GM12878 (cell line): ENCODE measurements at regions of chr7 and their contacts with region 1.

Region 1: DNA sequence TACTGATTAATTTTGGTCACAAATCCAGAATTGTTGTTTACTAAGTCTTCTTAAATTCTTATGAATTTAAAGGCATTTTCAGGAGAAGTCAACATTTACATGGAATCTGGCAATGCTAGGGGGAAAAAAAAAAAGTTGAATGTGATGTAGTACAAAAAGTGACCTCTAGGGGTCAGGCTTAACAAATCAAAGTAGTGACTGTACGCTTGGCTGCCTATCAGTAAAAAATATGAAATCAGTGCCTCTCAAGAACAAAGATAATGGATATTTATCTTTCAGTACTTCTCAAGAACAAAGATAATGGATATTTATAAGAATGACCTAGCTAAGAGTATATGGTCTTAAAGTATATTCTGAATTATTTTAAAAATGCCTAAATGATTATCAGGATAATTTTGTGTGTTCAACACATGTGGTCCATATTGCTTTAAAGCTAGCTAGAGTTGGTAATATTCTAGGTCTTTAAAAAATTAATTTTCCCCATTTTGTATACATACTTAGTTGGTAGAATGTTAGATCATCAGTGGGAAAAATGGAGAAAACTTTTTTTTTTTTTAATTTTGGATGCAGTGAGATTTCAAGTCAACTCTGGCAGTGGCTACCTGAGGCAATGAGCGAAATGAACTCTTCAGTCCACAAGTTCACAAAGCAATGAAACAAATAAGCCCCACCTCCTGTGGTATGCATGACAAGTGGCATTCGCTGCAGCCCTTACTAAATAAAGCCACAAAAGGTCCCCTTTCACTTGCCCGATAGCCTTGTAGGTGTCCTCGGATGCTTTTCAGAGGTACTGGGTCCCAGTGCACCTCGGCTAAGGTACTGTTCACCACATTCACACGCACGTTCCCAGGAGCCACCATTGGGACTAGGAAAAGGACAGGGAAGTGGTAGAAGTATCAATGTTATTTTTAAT is 51.2 kb upstream of the LAMB4 start:
- DNase-seq: peak; percentile 28
- ATAC-seq: peak; percentile 82
- H3K4me3 ChIP-seq: no peak overlapping the region
- H3K27ac ChIP-seq: no peak overlapping the region
- H3K4me1 ChIP-seq: no peaks in the 10 kb centered on the region
- H3K27me3 ChIP-seq: no peaks in the 10 kb centered on the region
- CTCF ChIP-seq: peak; percentile 48 to 74 (median 62); a peak in 5 of 6 replicates
- EP300 ChIP-seq: no peak
- POLR2A ChIP-seq: no peak
- RAD21 ChIP-seq: peak; percentile 85

Region 2: GRCh38 chr7:108124820-108125219 is 56.5 kb before region 1 on chr7:
- CTCF ChIA-PET with region 1: no interaction called
- POLR2A ChIA-PET with region 1: no interaction called
- RAD21 ChIA-PET with region 1: no interaction called
- SMC1A ChIA-PET with region 1: no interaction called
- in situ Hi-C with region 1: no loop called
- intact Hi-C with region 1: no loop called
- DNase-seq: no peak
- ATAC-seq: no peak
- H3K4me3 ChIP-seq: no peak overlapping the region
- H3K27ac ChIP-seq: no peak overlapping the region
- H3K4me1 ChIP-seq: no peaks in the 10 kb centered on the region
- H3K27me3 ChIP-seq: 0 out of 4 replicates have a peak, but pooled peaks cover 0 to 3% of the 10 kb centered on the region in 2 experiments
- CTCF ChIP-seq: no peak
- EP300 ChIP-seq: no peak
- POLR2A ChIP-seq: no peak
- RAD21 ChIP-seq: no peak

Region 3: GRCh38 chr7:108203537-108203936 is 22.2 kb after region 1 on chr7:
- CTCF ChIA-PET with region 1: interaction called, 8 read pairs
- POLR2A ChIA-PET with region 1: no interaction called
- RAD21 ChIA-PET with region 1: interaction called, 10 read pairs
- SMC1A ChIA-PET with region 1: interaction called, 6 read pairs
- in situ Hi-C with region 1: no loop called
- intact Hi-C with region 1: no loop called
- DNase-seq: no peak
- ATAC-seq: peak; percentile 69
- H3K4me3 ChIP-seq: no peak overlapping the region
- H3K27ac ChIP-seq: no peak overlapping the region
- H3K4me1 ChIP-seq: peaks cover 3% of the 10 kb centered on the region; the same call in 1 of the 2 replicates
- H3K27me3 ChIP-seq: no peaks in the 10 kb centered on the region
- CTCF ChIP-seq: no peak
- EP300 ChIP-seq: no peak
- POLR2A ChIP-seq: no peak
- RAD21 ChIP-seq: no peak

Region 4: GRCh38 chr7:108308903-108309302 is 127.6 kb after region 1 on chr7:
- CTCF ChIA-PET with region 1: no interaction called
- POLR2A ChIA-PET with region 1: no interaction called
- RAD21 ChIA-PET with region 1: no interaction called
- SMC1A ChIA-PET with region 1: interaction called, 6 read pairs
- in situ Hi-C with region 1: no loop called
- intact Hi-C with region 1: loop called (anchors 10 kb)
- DNase-seq: no peak
- ATAC-seq: peak; percentile 70
- H3K4me3 ChIP-seq: no peak overlapping the region
- H3K27ac ChIP-seq: no peak overlapping the region
- H3K4me1 ChIP-seq: peaks cover 9% of the 10 kb centered on the region
- H3K27me3 ChIP-seq: no peaks in the 10 kb centered on the region
- CTCF ChIP-seq: no peak
- EP300 ChIP-seq: peak in 1 of 2 experiments; percentile 29; a peak in 1 of 4 replicates
- POLR2A ChIP-seq: no peak
- RAD21 ChIP-seq: no peak

Region 5: GRCh38 chr7:108384721-108385481 is 203.6 kb after region 1 on chr7:
- CTCF ChIA-PET with region 1: interaction called, 4 read pairs
- POLR2A ChIA-PET with region 1: no interaction called
- RAD21 ChIA-PET with region 1: no interaction called
- SMC1A ChIA-PET with region 1: interaction called, 4 read pairs
- in situ Hi-C with region 1: no loop called
- intact Hi-C with region 1: loop called (anchors 2 kb)
- DNase-seq: no peak
- ATAC-seq: peak; percentile 96
- H3K4me3 ChIP-seq: no peak overlapping the region
- H3K27ac ChIP-seq: no peak overlapping the region
- H3K4me1 ChIP-seq: no peaks in the 10 kb centered on the region; the same call in 1 of the 2 replicates
- H3K27me3 ChIP-seq: no peaks in the 10 kb centered on the region
- CTCF ChIP-seq: peak; percentile 43 to 51 (median 45); a peak in 4 of 6 replicates
- EP300 ChIP-seq: no peak
- POLR2A ChIP-seq: no peak
- RAD21 ChIP-seq: peak; percentile 71

Region 6: GRCh38 chr7:108452722-108453121 is 271.4 kb after region 1 on chr7:
- CTCF ChIA-PET with region 1: interaction called, 16 read pairs
- POLR2A ChIA-PET with region 1: no interaction called
- RAD21 ChIA-PET with region 1: interaction called, 5 read pairs
- SMC1A ChIA-PET with region 1: interaction called, 4 read pairs
- in situ Hi-C with region 1: loop called (anchors 5 kb)
- intact Hi-C with region 1: loop called (anchors 1 kb)
- DNase-seq: no peak
- ATAC-seq: peak; percentile 65
- H3K4me3 ChIP-seq: no peak overlapping the region
- H3K27ac ChIP-seq: no peak overlapping the region
- H3K4me1 ChIP-seq: no peaks in the 10 kb centered on the region
- H3K27me3 ChIP-seq: peaks cover 13 to 14% of the 10 kb centered on the region in 2 experiments
- CTCF ChIP-seq: peak; percentile 47 to 61 (median 57); a peak in 5 of 6 replicates
- EP300 ChIP-seq: no peak
- POLR2A ChIP-seq: no peak
- RAD21 ChIP-seq: peak; percentile 56

Region 7: DNA sequence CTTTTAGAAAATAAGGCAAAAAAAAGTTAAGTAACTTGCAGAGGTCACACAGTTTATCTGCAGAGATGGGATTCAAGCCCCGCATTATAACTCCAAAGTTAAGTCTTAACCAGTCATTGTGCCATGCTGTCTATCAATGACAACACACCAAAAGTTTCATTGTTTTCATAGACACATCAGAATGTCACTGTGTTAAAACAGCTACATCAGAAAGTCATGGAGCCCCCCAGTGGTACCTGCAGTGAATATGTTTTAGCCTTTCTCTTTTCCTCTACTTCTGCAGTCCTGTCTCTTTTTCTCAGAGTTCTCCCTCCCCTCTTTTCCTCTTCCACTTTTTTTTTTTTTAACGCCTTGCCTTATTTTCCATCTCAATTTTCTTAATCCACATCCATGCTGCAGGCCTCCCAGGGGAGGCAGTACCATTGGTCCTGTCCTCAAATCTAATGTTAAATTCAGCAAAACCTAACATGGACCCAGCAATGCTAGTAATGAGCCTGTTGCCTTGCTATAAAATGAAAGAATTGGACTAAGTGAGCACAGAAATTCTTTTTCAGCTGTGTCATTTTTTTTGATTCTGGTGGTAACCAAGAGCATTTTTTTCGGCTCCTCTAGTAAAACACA is 278.7 kb after region 1 on chr7:
- CTCF ChIA-PET with region 1: interaction called, 19 read pairs
- POLR2A ChIA-PET with region 1: no interaction called
- RAD21 ChIA-PET with region 1: interaction called, 7 read pairs
- SMC1A ChIA-PET with region 1: interaction called, 14 read pairs
- in situ Hi-C with region 1: loop called (anchors 5 kb)
- intact Hi-C with region 1: loop called (anchors 1 kb)
- DNase-seq: no peak
- ATAC-seq: peak; percentile 77
- H3K4me3 ChIP-seq: no peak overlapping the region
- H3K27ac ChIP-seq: no peak overlapping the region
- H3K4me1 ChIP-seq: no peaks in the 10 kb centered on the region
- H3K27me3 ChIP-seq: peaks cover 11 to 16% of the 10 kb centered on the region in 2 experiments
- CTCF ChIP-seq: peak; percentile 50 to 73 (median 60); a peak in 5 of 6 replicates
- EP300 ChIP-seq: no peak
- POLR2A ChIP-seq: no peak
- RAD21 ChIP-seq: peak; percentile 82

Region 8: GRCh38 chr7:108503112-108504026 is 322.0 kb after region 1 on chr7:
- CTCF ChIA-PET with region 1: interaction called, 46 read pairs
- POLR2A ChIA-PET with region 1: no interaction called
- RAD21 ChIA-PET with region 1: interaction called, 7 read pairs
- SMC1A ChIA-PET with region 1: interaction called, 52 read pairs
- in situ Hi-C with region 1: loop called (anchors 5 kb)
- intact Hi-C with region 1: no loop called
- DNase-seq: peak; percentile 35
- ATAC-seq: peak; percentile 96
- H3K4me3 ChIP-seq: peak overlapping the region; percentile 19; the same call in 1 of the 2 replicates
- H3K27ac ChIP-seq: peak overlapping the region; percentile 81
- H3K4me1 ChIP-seq: peaks cover 4% of the 10 kb centered on the region; the same call in 1 of the 2 replicates
- H3K27me3 ChIP-seq: no peaks in the 10 kb centered on the region
- CTCF ChIP-seq: no peak
- EP300 ChIP-seq: no peak
- POLR2A ChIP-seq: no peak
- RAD21 ChIP-seq: no peak